A549 (cell line): ENCODE measurements at regions of chr5 and their contacts with region 1.

Region 1: GRCh38 chr5:133868946-133869518 is 99.4 kb downstream of the C5orf15 start:
- DNase-seq: peak; percentile 75
- ATAC-seq: peak; percentile 76 to 90
- H3K4me3 ChIP-seq: no peak overlapping the region
- H3K27ac ChIP-seq: peak overlapping the region; percentile 11 to 59; a peak in 2 of 6 replicates
- H3K4me1 ChIP-seq: peaks cover 16% of the 10 kb centered on the region; the same call in 1 of the 3 replicates
- CTCF ChIP-seq: peak; percentile 91
- EP300 ChIP-seq: no peak
- POLR2A ChIP-seq: no peak
- RAD21 ChIP-seq: peak; percentile 87 to 90

Region 2: DNA sequence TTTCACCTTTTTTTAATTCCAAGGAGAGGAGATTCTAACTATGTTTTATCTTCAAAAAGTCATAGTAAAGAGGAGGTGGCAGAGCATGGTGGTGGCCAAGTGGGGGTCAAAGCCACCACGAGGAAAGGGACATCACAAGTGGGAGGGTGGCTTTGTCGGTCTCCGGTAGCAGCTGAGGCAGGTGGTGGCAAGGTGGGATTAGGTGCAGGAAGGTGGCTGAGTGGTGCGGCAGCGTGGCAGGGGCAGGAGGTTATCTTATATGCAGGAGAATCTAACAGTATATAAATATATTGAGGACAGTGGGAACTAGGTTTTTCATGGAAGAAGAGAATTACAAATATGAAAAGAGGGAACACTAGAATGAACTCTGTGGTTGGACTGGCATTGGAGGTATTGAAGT is 453.5 kb before region 1 on chr5:
- CTCF ChIA-PET with region 1: interaction called, 74 read pairs
- POLR2A ChIA-PET with region 1: no interaction called
- DNase-seq: no peak
- ATAC-seq: no peak
- H3K4me3 ChIP-seq: no peak overlapping the region
- H3K27ac ChIP-seq: no peak overlapping the region
- H3K4me1 ChIP-seq: no peaks in the 10 kb centered on the region
- CTCF ChIP-seq: no peak
- EP300 ChIP-seq: no peak
- POLR2A ChIP-seq: no peak
- RAD21 ChIP-seq: no peak

Region 3: GRCh38 chr5:133552931-133553525 is 316.0 kb before region 1 on chr5:
- CTCF ChIA-PET with region 1: interaction called, 34 read pairs
- POLR2A ChIA-PET with region 1: no interaction called
- DNase-seq: peak; percentile 61 to 62
- ATAC-seq: peak; percentile 96 to 99
- H3K4me3 ChIP-seq: no peak overlapping the region
- H3K27ac ChIP-seq: no peak overlapping the region
- H3K4me1 ChIP-seq: no peaks in the 10 kb centered on the region
- CTCF ChIP-seq: peak; percentile 64
- EP300 ChIP-seq: no peak
- POLR2A ChIP-seq: no peak
- RAD21 ChIP-seq: peak; percentile 44 to 62; a peak in 4 of 5 replicates

Region 4: DNA sequence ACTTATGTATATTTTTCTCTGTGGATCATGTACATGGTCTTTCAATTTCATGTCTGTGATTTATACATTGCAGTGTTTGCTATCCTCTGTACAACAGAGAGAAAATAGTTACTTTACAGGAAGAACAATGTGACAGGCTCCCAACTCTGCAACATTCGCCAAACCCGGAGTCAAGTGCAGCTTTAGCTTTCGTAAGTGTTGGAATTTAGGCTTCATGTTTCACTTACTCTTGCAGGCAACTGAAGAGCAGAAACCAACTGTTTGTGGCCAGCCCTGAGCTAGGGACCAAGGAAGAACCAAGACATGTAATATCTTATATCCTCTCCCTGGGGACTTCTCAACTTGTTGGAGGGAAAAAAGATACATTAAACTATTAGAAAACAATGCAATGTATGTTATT is 48.5 kb before region 1 on chr5:
- CTCF ChIA-PET with region 1: interaction called, 12 read pairs
- POLR2A ChIA-PET with region 1: no interaction called
- DNase-seq: no peak
- ATAC-seq: no peak
- H3K4me3 ChIP-seq: no peak overlapping the region
- H3K27ac ChIP-seq: no peak overlapping the region
- H3K4me1 ChIP-seq: peaks cover 20% of the 10 kb centered on the region
- CTCF ChIP-seq: no peak
- EP300 ChIP-seq: no peak
- POLR2A ChIP-seq: no peak
- RAD21 ChIP-seq: no peak

Region 5: GRCh38 chr5:133842846-133843611 is 26.0 kb before region 1 on chr5:
- CTCF ChIA-PET with region 1: interaction called, 17 read pairs
- POLR2A ChIA-PET with region 1: no interaction called
- DNase-seq: no peak
- ATAC-seq: no peak
- H3K4me3 ChIP-seq: no peak overlapping the region
- H3K27ac ChIP-seq: no peak overlapping the region
- H3K4me1 ChIP-seq: no peaks in the 10 kb centered on the region
- CTCF ChIP-seq: no peak
- EP300 ChIP-seq: no peak
- POLR2A ChIP-seq: no peak
- RAD21 ChIP-seq: no peak

Region 6: GRCh38 chr5:133881576-133882388 is 12.8 kb after region 1 on chr5:
- CTCF ChIA-PET with region 1: interaction called, 78 read pairs
- POLR2A ChIA-PET with region 1: no interaction called
- DNase-seq: no peak
- ATAC-seq: no peak
- H3K4me3 ChIP-seq: no peak overlapping the region
- H3K27ac ChIP-seq: no peak overlapping the region
- H3K4me1 ChIP-seq: no peaks in the 10 kb centered on the region
- CTCF ChIP-seq: no peak
- EP300 ChIP-seq: no peak
- POLR2A ChIP-seq: no peak
- RAD21 ChIP-seq: no peak